ENCODE measurements at regions of chrX and their contacts with region 1.

Region 1: DNA sequence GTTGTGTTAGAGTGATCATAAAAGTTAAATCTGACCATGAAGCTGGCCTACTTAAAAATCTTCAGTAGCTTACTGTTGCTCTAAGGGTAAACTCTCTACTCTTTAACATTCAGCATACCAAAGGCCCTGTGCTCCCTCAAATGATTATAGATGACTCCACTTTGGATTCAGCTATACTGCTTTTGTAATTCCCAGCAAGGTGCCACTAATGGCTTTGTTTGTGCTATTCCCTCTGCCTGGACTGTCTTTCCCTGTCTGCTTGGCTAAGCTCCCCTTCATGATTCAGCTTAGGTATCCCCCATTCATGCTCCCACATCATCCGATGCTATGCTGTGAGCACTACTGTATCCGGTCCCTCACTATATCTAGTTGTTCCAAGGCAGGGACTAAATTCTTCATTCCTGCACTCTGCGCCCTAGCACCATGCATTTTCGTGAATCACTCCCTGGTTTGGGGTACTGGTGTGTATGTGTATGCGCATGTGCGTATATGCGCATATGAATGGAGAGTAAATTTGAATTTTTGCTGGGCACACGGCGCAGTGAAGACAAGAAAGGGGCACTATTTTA is 453 bp upstream of the PBDC1 start:
- DNase-seq: no peak
- H3K4me3 ChIP-seq: peak overlapping the region; percentile 76
- H3K27ac ChIP-seq: peak overlapping the region; percentile 84
- H3K27me3 ChIP-seq: no peaks in the 10 kb centered on the region
- CTCF ChIP-seq: no peak

Region 2: GRCh38 chrX:76183289-76184049 is 11.1 kb after region 1 on chrX:
- CTCF ChIA-PET with region 1: interaction called, 4 read pairs
- POLR2A ChIA-PET with region 1: interaction called, 30 read pairs
- DNase-seq: peak; percentile 69
- H3K4me3 ChIP-seq: peak overlapping the region; percentile 32
- H3K27ac ChIP-seq: peak overlapping the region; percentile 70
- H3K27me3 ChIP-seq: no peaks in the 10 kb centered on the region
- CTCF ChIP-seq: no peak

Region 3: GRCh38 chrX:76253432-76253831 is 81.0 kb after region 1 on chrX:
- CTCF ChIA-PET with region 1: interaction called, 10 read pairs
- POLR2A ChIA-PET with region 1: no interaction called
- DNase-seq: peak; percentile 8
- H3K4me3 ChIP-seq: no peak overlapping the region
- H3K27ac ChIP-seq: no peak overlapping the region
- H3K27me3 ChIP-seq: no peaks in the 10 kb centered on the region
- CTCF ChIP-seq: peak; percentile 63

Measured in AG04450 (cell line).